Posterior cingulate gyrus (tissue), 11 donors: ENCODE measurements at regions of chr6 and their contacts with region 1.

Region 1: DNA sequence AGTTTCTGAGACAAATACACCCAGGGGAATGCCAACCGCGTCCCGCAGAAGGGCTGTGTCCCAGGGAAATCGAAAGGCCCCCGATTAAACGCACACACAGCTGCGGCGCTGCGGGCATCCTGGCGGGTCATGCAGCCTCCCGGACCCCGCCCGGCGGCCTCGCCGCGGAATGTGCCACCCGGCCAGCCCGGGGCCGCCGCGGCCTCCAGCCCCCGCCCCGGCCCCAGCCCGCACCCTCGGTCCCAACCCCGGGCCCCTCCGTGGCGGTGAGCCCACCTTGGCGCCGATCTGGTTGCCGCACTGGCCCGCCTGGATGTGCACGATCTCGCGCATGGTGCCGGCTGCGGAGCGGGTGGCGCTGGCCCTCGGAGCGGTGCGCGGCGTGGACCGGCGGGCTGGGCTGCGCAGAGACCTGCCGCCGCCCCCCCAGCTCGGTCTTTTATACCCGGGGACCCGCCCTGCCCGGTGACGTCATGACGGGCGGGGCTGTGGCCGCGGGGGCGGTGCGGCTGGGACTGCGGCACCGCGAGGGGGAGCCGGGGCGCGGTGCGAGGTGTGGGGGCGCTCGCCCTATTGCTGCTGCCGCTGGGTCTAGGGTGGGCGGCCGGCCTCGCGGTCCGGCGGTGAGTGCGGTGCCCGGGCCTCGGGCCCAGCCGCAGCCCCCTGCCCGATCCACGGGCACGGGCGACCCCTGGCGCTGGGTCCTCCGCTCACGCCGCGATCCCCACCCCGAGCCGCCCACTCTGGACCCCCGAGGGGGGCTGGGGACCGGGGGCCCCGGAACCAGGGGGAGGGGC is at the start of gene TUBB2A:
- DNase-seq: peak; percentile 72 to 98 (median 84)

Region 2: DNA sequence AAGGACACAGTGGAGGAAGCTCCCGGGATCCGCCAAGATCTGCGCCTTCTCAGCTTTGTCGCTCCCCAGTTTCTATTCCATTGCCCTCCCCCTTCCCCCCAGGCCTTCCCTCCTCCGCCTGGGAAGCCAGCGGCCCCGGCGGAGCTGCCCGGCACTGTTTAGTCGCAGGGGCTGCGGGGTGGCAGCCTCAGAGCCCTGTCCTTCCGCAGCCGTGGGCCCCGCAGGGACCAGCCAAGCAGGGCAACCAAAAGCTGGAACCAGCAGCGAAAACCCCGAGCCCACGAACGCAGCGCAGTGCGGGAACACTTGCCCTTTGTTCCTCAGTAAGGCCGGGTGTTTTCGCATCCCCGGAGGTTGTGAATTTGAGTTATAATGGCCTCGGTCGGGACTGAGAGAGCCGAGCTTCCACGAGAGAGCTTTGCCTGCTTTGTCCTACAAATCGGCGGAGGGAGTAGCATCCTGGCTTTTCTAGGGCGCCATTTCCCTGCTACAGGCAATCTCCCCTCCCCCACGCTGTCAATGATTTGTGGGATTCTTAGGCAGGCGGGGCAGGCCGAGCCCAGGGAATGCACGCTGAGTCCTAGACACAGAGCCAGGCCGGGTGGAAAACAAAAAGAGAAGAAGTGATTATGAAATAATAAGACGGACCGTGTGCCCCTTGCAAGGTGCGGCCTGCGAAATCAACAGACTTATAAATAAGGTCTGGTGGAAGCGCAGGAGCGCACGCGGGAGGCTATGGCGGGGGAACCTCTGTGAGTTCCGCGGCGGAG is 74.1 kb after region 1 on chr6:
- intact Hi-C with region 1: loop called (anchors 5 kb)
- DNase-seq: peak; percentile 67 to 96 (median 80)